Left colon (tissue), 2 donors: ENCODE measurements at regions of chr2 and their contacts with region 1.

Region 1: DNA sequence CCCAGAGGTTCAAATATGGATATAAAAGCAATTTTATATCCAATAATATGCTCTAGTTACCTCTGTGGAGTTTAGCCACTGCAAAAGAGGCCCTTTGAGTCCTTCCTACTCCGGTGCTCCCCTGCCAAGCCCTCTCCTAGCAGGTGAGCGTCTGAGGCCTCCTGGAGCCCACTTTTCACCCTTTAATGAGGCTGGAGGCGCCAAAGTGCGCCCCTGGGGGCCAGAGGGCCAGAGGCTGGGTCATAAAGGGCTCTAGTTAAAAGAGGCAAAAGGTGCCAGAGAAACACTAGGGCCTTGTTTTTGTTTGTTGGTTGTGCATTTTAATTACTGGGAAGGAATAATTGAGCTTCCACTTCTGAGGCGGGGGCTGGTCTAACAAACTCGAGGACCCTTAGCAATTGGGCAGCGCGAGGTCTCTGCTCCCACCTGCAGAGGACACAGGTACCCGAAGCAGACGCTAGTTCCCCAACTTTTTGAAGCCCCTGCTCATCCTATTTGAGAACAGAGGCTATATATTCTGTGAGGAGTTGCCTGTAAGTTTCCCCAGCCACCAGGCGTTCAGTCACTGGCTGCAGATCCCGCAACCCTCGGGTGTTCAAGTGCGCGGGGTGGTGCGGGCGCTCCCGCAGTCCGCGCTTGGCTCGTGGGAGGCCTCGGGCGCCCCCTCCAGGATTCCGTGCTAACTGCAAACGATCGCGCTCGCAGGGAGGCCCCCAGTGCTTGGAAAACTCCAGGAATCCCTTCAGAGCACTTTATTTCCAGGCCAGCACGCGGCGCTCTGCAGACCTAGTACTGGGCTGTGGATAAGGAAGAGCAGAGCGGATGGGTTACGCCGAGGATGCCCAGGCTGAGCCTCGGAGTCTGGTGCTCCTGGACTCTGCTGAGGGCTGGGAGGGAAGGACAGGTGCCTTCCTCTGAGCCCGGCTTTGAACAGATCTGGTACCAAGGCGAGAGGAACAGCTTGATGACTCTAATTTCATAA is 14.1 kb downstream of the MSGN1 start:
- DNase-seq: peak; percentile 74 to 85
- ATAC-seq: peak; percentile 96

Region 2: DNA sequence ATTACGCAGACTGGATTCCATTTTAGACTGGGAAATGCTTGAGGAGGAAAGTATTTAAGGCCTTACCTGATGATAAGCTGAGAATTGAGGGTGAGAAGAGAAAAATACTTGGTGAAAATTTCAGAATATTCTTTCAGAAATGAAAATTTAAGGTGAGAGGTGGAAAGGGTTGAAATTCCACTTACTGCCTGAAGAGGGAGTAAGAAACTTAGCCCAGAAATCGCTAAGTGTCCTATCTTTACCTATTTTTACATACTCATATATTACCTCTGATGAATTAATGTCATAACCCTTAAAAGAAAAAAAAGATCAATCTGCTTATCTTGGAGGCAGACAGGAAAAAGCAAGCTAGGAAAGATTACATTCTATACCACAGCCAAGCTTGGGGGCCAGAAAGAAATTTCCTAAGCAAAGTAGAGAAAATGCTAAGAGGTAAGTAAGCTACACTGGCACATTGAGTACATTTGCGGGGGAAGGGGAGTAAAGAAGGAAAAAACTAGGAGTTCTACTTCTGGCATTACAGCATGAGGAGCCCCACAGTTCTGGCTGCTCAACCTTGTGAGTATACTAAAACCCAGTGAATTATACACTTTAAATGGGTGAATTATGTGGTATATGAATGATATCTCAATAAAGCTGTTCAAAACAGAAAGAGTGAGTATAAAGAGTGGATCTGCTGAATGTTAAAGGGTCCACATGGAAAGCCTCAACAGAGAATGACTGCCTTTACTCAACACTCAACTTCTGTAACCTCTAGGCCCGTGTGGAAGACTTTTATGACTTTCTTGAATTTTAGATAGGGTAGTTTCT is 110.6 kb before region 1 on chr2:
- intact Hi-C with region 1: loop called in 1 of 2 experiments (anchors 10 kb)
- DNase-seq: no peak
- ATAC-seq: no peak